ENCODE measurements at regions of chr4 and their contacts with region 1.

Region 1: DNA sequence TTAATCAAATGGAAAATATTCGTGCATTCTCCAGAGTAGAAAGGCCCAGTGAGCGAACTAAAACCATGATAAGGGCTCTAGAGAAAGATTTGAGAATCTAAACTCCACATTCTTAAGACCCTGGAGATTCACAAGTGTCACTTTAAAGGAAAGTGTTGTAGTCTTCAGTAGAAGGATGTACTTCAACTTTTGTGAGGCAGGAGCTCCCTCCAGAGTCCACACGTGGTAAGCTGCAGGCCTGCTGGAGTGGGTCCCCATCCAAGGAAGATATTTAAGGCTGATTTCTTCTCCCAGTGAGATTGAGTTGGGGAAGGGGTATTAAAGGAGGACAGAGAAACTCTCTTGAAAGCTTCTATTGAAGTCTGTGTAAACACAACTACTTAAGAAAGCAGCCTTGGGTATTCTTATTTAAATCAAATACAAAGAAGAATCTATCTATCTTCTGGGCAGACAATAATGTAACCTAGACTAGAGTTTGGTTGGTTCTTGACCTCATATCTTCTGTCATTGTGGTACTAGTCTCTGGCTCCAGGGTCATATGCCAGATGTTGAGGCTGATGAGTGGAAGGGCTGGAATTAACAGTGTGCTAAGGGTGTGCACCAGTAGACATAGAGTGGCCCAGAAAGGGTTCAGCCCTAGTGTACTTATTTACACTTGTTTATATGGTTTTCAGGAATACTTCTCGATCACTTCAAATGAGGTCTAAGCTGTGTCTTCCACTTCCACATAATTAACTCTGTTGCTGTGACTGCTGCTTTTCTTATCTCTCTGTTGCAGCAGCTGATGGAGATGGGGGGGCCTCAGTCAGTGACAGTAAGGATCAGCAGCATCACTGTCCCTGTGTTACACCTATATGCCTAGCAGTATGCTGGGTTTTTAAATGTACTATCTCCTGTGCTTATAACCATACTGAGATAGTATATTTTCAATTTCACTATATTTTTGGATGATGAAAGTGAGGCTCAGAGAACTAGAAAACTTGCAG is 76.1 kb downstream of the HMGB2 start:
- DNase-seq: peak; percentile 77
- H3K4me3 ChIP-seq: no peak overlapping the region
- H3K27ac ChIP-seq: no peak overlapping the region
- H3K4me1 ChIP-seq: no peaks in the 10 kb centered on the region
- H3K27me3 ChIP-seq: no peaks in the 10 kb centered on the region
- CTCF ChIP-seq: peak; percentile 43 to 68 (median 49)
- POLR2A ChIP-seq: no peak

Region 2: GRCh38 chr4:172740434-172740833 is 517.6 kb before region 1 on chr4:
- intact Hi-C with region 1: no loop called
- DNase-seq: no peak
- H3K4me3 ChIP-seq: no peak overlapping the region
- H3K27ac ChIP-seq: no peak overlapping the region
- H3K4me1 ChIP-seq: no peaks in the 10 kb centered on the region
- H3K27me3 ChIP-seq: no peaks in the 10 kb centered on the region
- CTCF ChIP-seq: no peak
- POLR2A ChIP-seq: no peak

Region 3: GRCh38 chr4:173019711-173020110 is 238.3 kb before region 1 on chr4:
- intact Hi-C with region 1: loop called (anchors 5 kb)
- DNase-seq: no peak
- H3K4me3 ChIP-seq: no peak overlapping the region
- H3K27ac ChIP-seq: no peak overlapping the region
- H3K4me1 ChIP-seq: no peaks in the 10 kb centered on the region
- H3K27me3 ChIP-seq: no peaks in the 10 kb centered on the region
- CTCF ChIP-seq: no peak
- POLR2A ChIP-seq: no peak

Region 4: GRCh38 chr4:173168396-173169177 is 89.4 kb before region 1 on chr4 and contains the start of gene GALNT7:
- intact Hi-C with region 1: no loop called
- DNase-seq: peak; percentile 80
- H3K4me3 ChIP-seq: peak within 1 kb of the TSS; percentile 89
- H3K27ac ChIP-seq: peak within 1 kb of the TSS; percentile 93 to 98
- H3K4me1 ChIP-seq: peaks cover 5% of the 10 kb centered on the region
- H3K27me3 ChIP-seq: no peaks in the 10 kb centered on the region
- CTCF ChIP-seq: no peak
- POLR2A ChIP-seq: no peak
- total RNA-seq, gene GALNT7: 28.8 to 32.0 TPM